ENCODE measurements at regions of chr4 and their contacts with region 1.

Region 1: DNA sequence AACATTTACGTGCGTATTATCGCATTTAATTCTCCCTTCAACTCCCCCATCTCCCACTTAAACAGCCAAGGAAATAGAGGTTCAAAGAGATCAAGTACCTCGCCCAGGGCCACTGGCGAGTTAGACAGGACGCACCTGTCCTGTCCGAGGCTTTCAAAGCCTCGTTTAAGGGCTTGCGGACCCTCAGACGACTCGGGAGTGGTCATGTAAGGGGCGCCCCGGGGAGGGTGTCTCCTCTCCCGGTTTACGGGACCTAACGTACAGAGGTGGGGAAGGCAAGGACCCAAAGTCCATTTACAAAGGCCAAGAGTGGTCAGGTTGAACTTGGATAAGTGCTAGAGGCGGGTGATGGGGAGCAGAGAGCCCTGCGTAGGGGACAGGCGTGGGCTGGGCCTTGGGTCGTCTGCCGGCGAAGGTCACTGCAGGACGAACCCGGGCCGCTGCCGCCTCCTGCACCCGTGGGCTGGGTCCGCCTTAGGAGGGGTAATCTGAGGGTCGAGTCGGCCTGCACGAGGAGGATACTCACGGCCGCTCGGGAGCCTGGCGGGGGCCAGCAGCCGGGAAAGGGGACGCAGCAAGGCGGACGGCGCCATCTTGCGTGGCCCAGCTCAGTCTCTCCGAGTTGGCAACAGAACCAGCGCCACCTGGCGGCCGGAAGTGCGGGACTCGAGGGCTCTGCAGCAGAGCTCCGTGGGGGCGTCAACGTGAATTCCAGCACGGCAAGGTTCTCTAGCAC is 5.9 kb upstream of the NAA15 start:
- DNase-seq: peak; percentile 100
- H3K4me3 ChIP-seq: peak overlapping the region; percentile 68 to 78 (median 70)
- H3K27ac ChIP-seq: peak overlapping the region; percentile 83 to 87 (median 84)
- H3K4me1 ChIP-seq: peaks cover 14 to 61% (median 43%) of the 10 kb centered on the region in 4 donors
- H3K27me3 ChIP-seq: no peaks in the 10 kb centered on the region
- CTCF ChIP-seq: peak; percentile 91 to 98 (median 94)
- EP300 ChIP-seq: no peak
- POLR2A ChIP-seq: no peak

Region 2: GRCh38 chr4:138927072-138927471 is 368.3 kb before region 1 on chr4:
- intact Hi-C with region 1: no loop called
- DNase-seq: no peak
- H3K4me3 ChIP-seq: no peak overlapping the region
- H3K27ac ChIP-seq: no peak overlapping the region
- H3K4me1 ChIP-seq: no peaks in the 10 kb centered on the region
- H3K27me3 ChIP-seq: no peaks in the 10 kb centered on the region
- CTCF ChIP-seq: no peak
- EP300 ChIP-seq: no peak
- POLR2A ChIP-seq: no peak

Region 3: DNA sequence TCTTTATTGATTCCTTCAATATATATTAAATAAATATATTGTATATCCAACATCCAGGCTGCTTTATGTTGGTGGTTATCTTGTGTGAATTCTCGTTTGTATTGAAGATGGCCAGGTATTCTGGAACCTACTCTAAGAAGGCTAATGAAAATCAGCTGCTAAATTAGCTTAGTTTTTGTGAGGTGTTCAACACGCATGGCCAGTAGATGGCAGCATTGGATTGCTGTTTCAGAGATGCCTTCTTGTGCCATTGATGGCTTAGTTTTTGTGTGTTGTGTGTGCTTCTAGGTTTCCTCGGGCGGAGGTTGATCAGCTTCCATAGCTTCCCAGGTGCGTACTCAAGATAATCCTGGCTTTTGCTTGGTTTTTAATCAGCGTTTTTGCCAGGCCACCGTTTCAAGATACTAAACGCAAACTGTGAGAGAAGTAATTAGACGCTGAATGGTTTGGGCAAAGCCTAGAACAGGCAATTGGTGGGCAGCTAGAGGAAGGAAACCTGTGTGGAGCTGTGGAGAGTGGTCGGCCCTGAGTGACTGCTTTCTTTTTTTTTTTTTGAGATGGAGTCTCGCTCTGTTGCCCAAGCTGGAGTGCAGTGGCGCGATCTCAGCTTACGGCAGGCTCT is 264.6 kb before region 1 on chr4:
- intact Hi-C with region 1: loop called (anchors 5 kb)
- DNase-seq: no peak
- H3K4me3 ChIP-seq: no peak overlapping the region
- H3K27ac ChIP-seq: no peak overlapping the region
- H3K4me1 ChIP-seq: peaks cover 3 to 48% (median 13%) of the 10 kb centered on the region in 4 donors
- H3K27me3 ChIP-seq: no peaks in the 10 kb centered on the region
- CTCF ChIP-seq: peak; percentile 76 to 84 (median 79)
- EP300 ChIP-seq: no peak
- POLR2A ChIP-seq: no peak

Region 4: GRCh38 chr4:139229534-139230039 is 65.8 kb before region 1 on chr4:
- intact Hi-C with region 1: loop called (anchors 1 kb)
- DNase-seq: no peak
- H3K4me3 ChIP-seq: no peak overlapping the region
- H3K27ac ChIP-seq: no peak overlapping the region
- H3K4me1 ChIP-seq: no peaks in the 10 kb centered on the region
- H3K27me3 ChIP-seq: no peaks in the 10 kb centered on the region
- CTCF ChIP-seq: peak; percentile 66 to 75 (median 70)
- EP300 ChIP-seq: no peak
- POLR2A ChIP-seq: no peak

Region 5: GRCh38 chr4:139841464-139842246 is 546.3 kb after region 1 on chr4:
- intact Hi-C with region 1: no loop called
- DNase-seq: peak; percentile 77
- H3K4me3 ChIP-seq: no peak overlapping the region
- H3K27ac ChIP-seq: no peak overlapping the region
- H3K4me1 ChIP-seq: peaks cover 0 to 7% (median 0%) of the 10 kb centered on the region in 4 donors
- H3K27me3 ChIP-seq: no peaks in the 10 kb centered on the region
- CTCF ChIP-seq: no peak
- EP300 ChIP-seq: no peak
- POLR2A ChIP-seq: no peak